Right cardiac atrium (tissue), 5 donors: ENCODE measurements at regions of chr10 and their contacts with region 1.

Region 1: GRCh38 chr10:45464958-45465567 is 91.0 kb downstream of the ALOX5 start:
- DNase-seq: peak; percentile 78 to 91 (median 89)
- ATAC-seq: peak; percentile 93 to 94
- H3K4me3 ChIP-seq: no peak overlapping the region
- H3K27ac ChIP-seq: no peak overlapping the region
- H3K4me1 ChIP-seq: peaks cover 4% of the 10 kb centered on the region
- H3K27me3 ChIP-seq: no peaks in the 10 kb centered on the region

Region 2: DNA sequence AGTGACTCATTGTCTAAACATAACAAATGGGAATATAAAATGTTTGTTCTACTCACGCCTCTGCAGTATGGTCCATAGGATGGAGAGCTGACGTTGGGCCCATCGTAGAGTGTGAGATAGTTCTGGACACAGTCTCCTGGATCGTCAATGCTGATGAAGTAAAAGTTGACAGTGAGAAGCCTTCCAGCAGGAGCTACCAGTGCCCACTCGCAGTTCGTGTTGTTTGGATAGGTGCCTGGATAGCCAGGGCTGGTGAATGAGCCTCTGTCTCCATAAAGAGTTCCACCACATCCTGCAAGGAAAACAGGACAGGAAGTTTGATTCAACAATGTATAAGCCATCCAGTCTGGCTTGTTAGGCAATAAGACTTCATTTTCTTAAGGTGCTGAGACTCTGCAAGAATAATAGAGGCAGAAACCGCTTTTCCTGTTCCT is 229.2 kb before region 1 on chr10:
- intact Hi-C with region 1: no loop called
- DNase-seq: no peak
- ATAC-seq: peak in 1 of 2 donors; percentile 69
- H3K4me3 ChIP-seq: no peak overlapping the region
- H3K27ac ChIP-seq: no peak overlapping the region
- H3K4me1 ChIP-seq: no peaks in the 10 kb centered on the region
- H3K27me3 ChIP-seq: no peaks in the 10 kb centered on the region

Region 3: GRCh38 chr10:45246522-45246921 is 218.5 kb before region 1 on chr10:
- intact Hi-C with region 1: no loop called
- DNase-seq: no peak
- ATAC-seq: no peak
- H3K4me3 ChIP-seq: no peak overlapping the region
- H3K27ac ChIP-seq: no peak overlapping the region
- H3K4me1 ChIP-seq: no peaks in the 10 kb centered on the region
- H3K27me3 ChIP-seq: no peaks in the 10 kb centered on the region

Region 4: GRCh38 chr10:45594276-45595106 is 129.4 kb after region 1 on chr10:
- intact Hi-C with region 1: loop called in 1 of 4 experiments (anchors 10 kb)
- DNase-seq: peak; percentile 94 to 98 (median 97)
- ATAC-seq: peak; percentile 99
- H3K4me3 ChIP-seq: peak overlapping the region; percentile 88
- H3K27ac ChIP-seq: peak overlapping the region; percentile 42
- H3K4me1 ChIP-seq: no peaks in the 10 kb centered on the region
- H3K27me3 ChIP-seq: no peaks in the 10 kb centered on the region